Dorsolateral prefrontal cortex (tissue), 120 donors: ENCODE measurements at regions of chr10 and their contacts with region 1.

Region 1: DNA sequence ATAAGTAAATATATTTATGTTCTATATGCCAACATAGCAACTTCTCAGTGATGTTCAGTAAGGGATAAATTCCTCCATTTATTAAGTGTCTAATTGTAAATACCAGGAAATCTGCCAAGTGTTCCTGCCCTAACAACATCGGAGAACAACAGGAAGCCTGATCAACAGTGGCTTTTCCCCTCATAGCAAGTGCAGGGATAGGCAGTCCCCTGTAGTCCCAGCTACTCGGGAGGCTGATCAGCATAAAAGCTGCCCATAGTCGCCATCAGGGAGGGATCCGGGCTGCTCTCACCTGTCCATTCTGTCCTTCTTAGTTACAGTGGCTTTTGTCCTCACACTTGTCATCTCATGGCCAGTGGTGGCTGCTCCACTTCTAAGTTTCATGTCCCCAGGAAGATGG is 141.3 kb downstream of the IDE start:
- DNase-seq: no peak
- H3K4me3 ChIP-seq: no peak overlapping the region
- H3K27ac ChIP-seq: no peak overlapping the region
- H3K27me3 ChIP-seq: no peaks in the 10 kb centered on the region
- CTCF ChIP-seq: no peak

Region 2: GRCh38 chr10:91758303-91759146 is 674.1 kb before region 1 on chr10:
- intact Hi-C with region 1: loop called in 1 of 2 experiments (anchors 5 kb)
- DNase-seq: no peak
- H3K4me3 ChIP-seq: no peak overlapping the region
- H3K27ac ChIP-seq: no peak overlapping the region
- H3K27me3 ChIP-seq: no peaks in the 10 kb centered on the region
- CTCF ChIP-seq: peak in 55 of 56 donors; percentile 27 to 83 (median 60)

Region 3: GRCh38 chr10:92087750-92088395 is 344.7 kb before region 1 on chr10:
- intact Hi-C with region 1: loop called (anchors 1 to 5 kb)
- DNase-seq: peak in 8 of 10 donors; percentile 47 to 84 (median 56)
- H3K4me3 ChIP-seq: no peak overlapping the region
- H3K27ac ChIP-seq: peak overlapping the region in 21 of 59 donors; percentile 0 to 48 (median 24)
- H3K27me3 ChIP-seq: no peaks in the 10 kb centered on the region
- CTCF ChIP-seq: peak; percentile 9 to 91 (median 76)

Region 4: GRCh38 chr10:92323079-92323478 is 109.5 kb before region 1 on chr10:
- intact Hi-C with region 1: no loop called
- DNase-seq: no peak
- H3K4me3 ChIP-seq: no peak overlapping the region
- H3K27ac ChIP-seq: no peak overlapping the region
- H3K27me3 ChIP-seq: no peaks in the 10 kb centered on the region
- CTCF ChIP-seq: no peak

Region 5: GRCh38 chr10:92356041-92356440 is 76.6 kb before region 1 on chr10:
- intact Hi-C with region 1: no loop called
- DNase-seq: no peak
- H3K4me3 ChIP-seq: no peak overlapping the region
- H3K27ac ChIP-seq: no peak overlapping the region
- H3K27me3 ChIP-seq: no peaks in the 10 kb centered on the region
- CTCF ChIP-seq: no peak